H1 (cell line): ENCODE measurements at regions of chr11 and their contacts with region 1.

Region 1: DNA sequence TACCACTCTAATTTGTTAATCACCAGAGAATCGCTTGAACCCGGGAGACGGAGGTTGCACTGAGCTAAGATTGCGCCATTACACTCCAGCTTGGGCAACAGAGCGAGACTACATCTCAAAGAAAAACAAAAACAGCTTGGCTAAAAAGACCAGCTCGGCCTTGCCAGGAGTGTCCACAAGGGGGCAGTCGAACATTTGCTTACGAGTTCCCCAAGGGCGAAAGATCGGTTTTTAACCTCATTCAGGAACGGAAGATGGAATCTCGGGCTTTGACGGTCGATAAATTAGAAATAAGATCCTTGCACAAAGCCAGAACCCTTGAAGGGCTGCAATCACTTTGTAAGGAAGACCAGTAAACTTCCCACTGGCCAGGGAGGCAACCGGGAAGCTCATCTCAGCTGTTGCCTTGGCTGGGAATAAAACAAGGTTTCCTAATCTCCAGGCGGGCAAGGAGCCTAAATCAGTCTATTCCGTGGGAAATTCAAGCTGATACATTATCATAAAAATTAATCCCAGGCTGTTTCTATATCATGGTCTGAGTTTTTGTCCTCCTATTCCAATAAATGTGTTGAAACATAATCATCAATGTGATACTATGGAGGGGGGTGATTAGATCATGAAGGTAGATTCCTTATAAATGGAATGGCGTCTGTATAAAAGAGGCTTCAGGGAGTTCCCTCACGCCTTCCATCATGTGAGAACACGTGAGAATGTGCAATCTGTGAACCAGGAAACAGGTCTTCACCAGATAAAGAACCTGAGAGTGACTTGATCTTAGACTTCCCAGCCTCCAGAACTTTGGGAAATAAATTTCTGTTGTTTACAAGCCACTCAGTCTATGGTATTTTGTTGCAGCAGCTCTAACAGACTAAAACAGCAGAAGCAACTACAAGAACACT is 14.9 kb upstream of the SLC29A2 start:
- DNase-seq: peak; percentile 75 to 97
- H3K4me3 ChIP-seq: peak overlapping the region in 3 of 4 experiments; percentile 16 to 46 (median 23); a peak in 6 of 8 replicates
- H3K27ac ChIP-seq: no peak overlapping the region
- H3K4me1 ChIP-seq: no peaks in the 10 kb centered on the region
- H3K27me3 ChIP-seq: no peaks in the 10 kb centered on the region
- CTCF ChIP-seq: peak; percentile 79 to 99 (median 89)
- EP300 ChIP-seq: no peak
- POLR2A ChIP-seq: no peak
- RAD21 ChIP-seq: peak; percentile 75 to 78

Region 2: DNA sequence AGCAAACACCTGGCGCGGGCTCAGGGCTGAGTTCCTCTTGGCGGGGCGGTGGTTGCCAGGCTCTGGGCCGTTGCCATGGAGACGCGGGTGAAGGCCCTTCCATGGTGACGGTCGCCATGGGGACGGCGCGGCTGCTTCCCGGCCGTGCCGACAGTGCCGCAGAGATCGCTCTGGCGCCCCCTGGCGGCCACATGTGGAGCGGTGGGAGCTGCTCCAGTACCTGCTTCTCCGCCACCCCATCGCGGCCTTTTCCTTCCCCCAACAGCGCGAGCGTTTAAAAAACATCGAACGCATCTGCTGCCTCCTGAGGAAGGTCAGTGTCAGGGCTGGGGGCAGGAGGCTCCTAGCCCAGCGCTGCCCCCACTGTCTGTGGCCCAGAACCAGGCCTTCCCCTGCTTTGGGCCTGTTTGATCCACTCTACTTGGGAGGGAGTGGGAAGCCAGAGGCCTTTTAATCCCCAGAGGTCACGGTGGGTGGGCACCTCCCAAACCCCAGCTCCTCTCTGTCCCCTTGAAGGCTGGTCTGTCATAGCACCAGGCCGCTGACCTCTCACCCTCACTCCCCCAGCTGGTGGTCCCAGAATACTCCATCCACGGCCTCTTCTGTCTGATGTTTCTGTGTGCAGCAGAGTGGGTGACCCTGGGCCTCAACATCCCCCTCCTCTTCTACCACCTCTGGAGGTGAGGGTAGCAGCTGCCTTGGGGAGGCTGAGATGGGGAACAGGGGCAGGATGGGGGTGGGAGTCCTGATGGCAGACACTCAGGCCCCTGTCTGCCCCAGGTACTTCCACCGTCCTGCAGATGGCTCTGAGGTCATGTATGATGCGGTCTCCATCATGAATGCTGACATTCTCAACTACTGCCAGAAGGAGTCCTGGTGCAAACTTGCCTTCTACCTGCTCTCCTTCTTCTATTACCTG is 103.7 kb before region 1 on chr11:
- CTCF ChIA-PET with region 1: no interaction called
- POLR2A ChIA-PET with region 1: no interaction called
- DNase-seq: peak; percentile 93 to 100
- H3K4me3 ChIP-seq: no peak overlapping the region; a peak in 2 of 8 replicates
- H3K27ac ChIP-seq: no peak overlapping the region; the same call in 1 of the 2 replicates
- H3K4me1 ChIP-seq: peaks cover 0 to 16% (median 13%) of the 10 kb centered on the region in 4 experiments; a peak in 5 of 7 replicates
- H3K27me3 ChIP-seq: peaks cover 0 to 4% (median under 1%) of the 10 kb centered on the region in 4 experiments; a peak in 2 of 7 replicates
- CTCF ChIP-seq: peak; percentile 91 to 95 (median 95)
- EP300 ChIP-seq: peak in 1 of 2 experiments; percentile 23; a peak in 2 of 3 replicates
- POLR2A ChIP-seq: 0 out of 3 replicates have a peak, but pooled peaks of 1 of the 2 experiments have one; percentile 28
- RAD21 ChIP-seq: peak; percentile 55 to 72

Region 3: DNA sequence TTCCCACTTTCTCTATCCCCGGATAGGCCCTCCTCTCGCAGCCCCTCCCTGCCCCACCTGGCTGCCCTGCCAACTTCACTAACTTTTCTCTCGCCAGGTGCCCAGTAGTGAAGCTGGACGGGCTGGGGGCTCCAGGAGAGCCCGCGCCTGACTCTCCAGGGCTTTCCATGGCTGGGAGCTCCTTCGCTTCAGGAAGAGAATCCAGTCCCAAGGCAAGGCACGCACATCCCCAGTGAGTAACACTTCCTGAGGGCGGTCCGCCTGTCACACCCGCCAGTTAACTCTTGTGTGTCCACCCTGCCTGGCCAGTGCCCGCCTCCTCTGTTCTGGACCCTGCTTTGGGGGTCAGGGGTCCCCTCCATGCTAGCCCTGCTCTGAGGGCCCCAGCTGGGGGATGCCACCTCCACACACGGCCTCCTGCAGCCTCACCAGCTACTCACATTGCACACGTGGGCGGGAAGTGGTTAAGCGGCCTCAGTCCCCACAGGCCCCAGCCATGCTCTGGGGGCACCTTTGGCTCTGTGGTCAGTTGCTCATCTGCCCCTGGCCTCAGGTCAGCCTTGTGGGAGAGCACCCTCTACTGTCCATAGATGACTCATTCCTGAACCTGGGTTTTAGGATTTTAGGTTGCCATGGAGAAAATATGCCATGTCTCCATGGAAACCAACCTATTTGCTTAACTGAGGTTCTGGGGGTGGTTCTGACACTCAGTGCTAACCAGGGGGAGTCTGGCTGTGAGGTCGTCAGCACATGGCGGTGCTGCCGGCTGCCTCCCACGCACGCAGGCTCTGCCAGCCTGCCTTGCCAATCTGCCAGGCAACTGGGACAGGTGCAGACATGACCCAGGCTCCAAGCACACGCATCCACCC is 50.0 kb before region 1 on chr11 and contains the start of gene RIN1:
- CTCF ChIA-PET with region 1: interaction called, 14 read pairs
- POLR2A ChIA-PET with region 1: interaction called, 487 read pairs
- DNase-seq: peak in 1 of 2 experiments; percentile 77
- H3K4me3 ChIP-seq: peak within 1 kb of the TSS; percentile 1 to 62 (median 48); a peak in 7 of 8 replicates
- H3K27ac ChIP-seq: 0 out of 2 replicates have a peak within 1 kb of the TSS, but pooled peaks have one; percentile 20
- H3K4me1 ChIP-seq: peaks cover 0 to 20% (median 14%) of the 10 kb centered on the region in 4 experiments; a peak in 6 of 7 replicates
- H3K27me3 ChIP-seq: no peaks in the 10 kb centered on the region; a peak in 2 of 7 replicates
- CTCF ChIP-seq: peak in 2 of 3 experiments; percentile 65 to 75; a peak in 3 of 4 replicates
- EP300 ChIP-seq: no peak
- POLR2A ChIP-seq: no peak; a peak in 1 of 3 replicates
- RAD21 ChIP-seq: peak; percentile 70 to 79
- total RNA-seq, gene RIN1: 5.4 and 6.6 TPM in 2 replicates

Region 4: GRCh38 chr11:66363805-66364535 is 22.4 kb before region 1 on chr11:
- CTCF ChIA-PET with region 1: interaction called, 39 read pairs
- POLR2A ChIA-PET with region 1: interaction called, 487 read pairs
- DNase-seq: peak; percentile 77 to 99
- H3K4me3 ChIP-seq: no peak overlapping the region
- H3K27ac ChIP-seq: no peak overlapping the region
- H3K4me1 ChIP-seq: peaks cover 0 to 3% (median 0%) of the 10 kb centered on the region in 4 experiments; a peak in 2 of 7 replicates
- H3K27me3 ChIP-seq: no peaks in the 10 kb centered on the region
- CTCF ChIP-seq: peak; percentile 81 to 98 (median 88)
- EP300 ChIP-seq: no peak; a peak in 1 of 3 replicates
- POLR2A ChIP-seq: no peak; a peak in 1 of 3 replicates
- RAD21 ChIP-seq: peak; percentile 32 to 52; a peak in 3 of 4 replicates

Region 5: DNA sequence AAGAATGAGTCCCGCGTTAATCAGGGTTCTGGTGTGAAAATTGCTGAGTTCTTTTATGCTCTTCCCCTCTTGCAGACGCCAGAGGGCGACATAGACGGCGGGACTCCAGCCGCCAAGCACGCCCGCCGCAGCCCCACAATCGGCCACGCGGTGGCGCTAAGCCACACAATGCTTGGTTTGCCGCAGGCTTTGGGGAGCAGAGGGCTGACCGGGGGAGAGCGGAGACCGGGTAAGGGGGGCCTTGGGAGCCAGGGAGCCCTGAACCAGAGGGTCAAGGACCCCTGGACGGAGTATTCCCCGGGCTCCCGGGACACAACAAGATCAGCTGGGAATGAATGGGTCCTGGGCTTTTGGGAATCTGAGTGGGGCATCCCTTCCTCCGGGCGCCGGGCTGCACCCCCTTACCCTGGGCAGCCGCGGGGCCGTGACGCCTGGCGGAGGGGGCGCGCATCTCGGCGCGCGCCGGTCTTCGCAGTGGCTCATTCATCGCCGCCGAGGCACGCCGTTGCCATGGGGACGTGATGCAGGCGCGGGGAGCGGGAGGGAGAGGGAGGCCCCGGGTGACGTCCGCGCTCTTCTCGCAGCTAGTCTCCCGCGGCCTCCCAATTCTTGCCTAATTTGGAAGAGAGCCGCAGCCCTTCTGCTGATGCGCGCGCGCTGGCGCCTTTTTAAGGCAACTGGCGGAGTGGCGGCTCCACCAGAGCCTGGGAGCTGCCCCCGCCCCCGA is 22.2 kb after region 1 on chr11:
- CTCF ChIA-PET with region 1: interaction called, 100 read pairs
- POLR2A ChIA-PET with region 1: no interaction called
- DNase-seq: peak; percentile 85 to 100
- H3K4me3 ChIP-seq: peak overlapping the region; percentile 8 to 68 (median 30)
- H3K27ac ChIP-seq: no peak overlapping the region
- H3K4me1 ChIP-seq: peaks cover 0 to 14% (median 11%) of the 10 kb centered on the region in 4 experiments; a peak in 6 of 7 replicates
- H3K27me3 ChIP-seq: peaks cover 0 to 10% (median 2%) of the 10 kb centered on the region in 4 experiments; a peak in 3 of 7 replicates
- CTCF ChIP-seq: peak; percentile 99 to 100 (median 100)
- EP300 ChIP-seq: no peak; a peak in 1 of 3 replicates
- POLR2A ChIP-seq: peak in 1 of 2 experiments; percentile 54; a peak in 2 of 3 replicates
- RAD21 ChIP-seq: peak; percentile 98 to 99

Region 6: GRCh38 chr11:66429983-66430602 is 43.7 kb after region 1 on chr11:
- CTCF ChIA-PET with region 1: interaction called, 22 read pairs
- POLR2A ChIA-PET with region 1: no interaction called
- DNase-seq: peak; percentile 29 to 91
- H3K4me3 ChIP-seq: no peak overlapping the region
- H3K27ac ChIP-seq: no peak overlapping the region
- H3K4me1 ChIP-seq: no peaks in the 10 kb centered on the region
- H3K27me3 ChIP-seq: no peaks in the 10 kb centered on the region; a peak in 1 of 7 replicates
- CTCF ChIP-seq: peak; percentile 91 to 97 (median 91)
- EP300 ChIP-seq: no peak
- POLR2A ChIP-seq: no peak
- RAD21 ChIP-seq: peak; percentile 91 to 94